B cell (primary cell): ENCODE measurements at regions of chr20 and their contacts with region 1.

Region 1: GRCh38 chr20:3156811-3157619 is 2.6 kb downstream of the FASTKD5 start:
- DNase-seq: peak; percentile 24
- ATAC-seq: peak; percentile 23
- H3K4me3 ChIP-seq: no peak overlapping the region
- H3K4me3 Mint-ChIP-seq: peak overlapping the region; percentile 67
- H3K27ac ChIP-seq: peak overlapping the region; percentile 1 to 48
- H3K27ac Mint-ChIP-seq: peak overlapping the region; percentile 74
- H3K4me1 ChIP-seq: peaks cover 34 to 38% of the 10 kb centered on the region in 2 donors
- H3K4me1 Mint-ChIP-seq: peaks cover 61% of the 10 kb centered on the region
- H3K27me3 ChIP-seq: no peaks in the 10 kb centered on the region
- H3K27me3 Mint-ChIP-seq: no peaks in the 10 kb centered on the region
- CTCF ChIP-seq: no peak

Region 2: GRCh38 chr20:3092611-3093379 is 64.2 kb before region 1 on chr20:
- CTCF ChIA-PET with region 1: no interaction called
- POLR2A ChIA-PET with region 1: no interaction called
- intact Hi-C with region 1: loop called (anchors 2 kb)
- DNase-seq: peak; percentile 73
- ATAC-seq: peak; percentile 59
- H3K4me3 ChIP-seq: peak overlapping the region in 4 of 5 experiments; percentile 44 to 73 (median 58)
- H3K4me3 Mint-ChIP-seq: peak overlapping the region; percentile 93
- H3K27ac ChIP-seq: peak overlapping the region; percentile 58 to 68
- H3K27ac Mint-ChIP-seq: peak overlapping the region; percentile 97
- H3K4me1 ChIP-seq: peaks cover 18 to 27% of the 10 kb centered on the region in 2 donors
- H3K4me1 Mint-ChIP-seq: peaks cover 24% of the 10 kb centered on the region
- H3K27me3 ChIP-seq: peaks cover 0 to 12% (median 6%) of the 10 kb centered on the region in 4 experiments
- H3K27me3 Mint-ChIP-seq: peaks cover 21% of the 10 kb centered on the region
- CTCF ChIP-seq: no peak

Region 3: GRCh38 chr20:3204124-3204822 is 47.3 kb after region 1 on chr20 and contains the start of gene DDRGK1:
- CTCF ChIA-PET with region 1: no interaction called
- POLR2A ChIA-PET with region 1: interaction called, 3 read pairs
- intact Hi-C with region 1: loop called (anchors 5 kb)
- DNase-seq: peak; percentile 96
- ATAC-seq: peak; percentile 93
- H3K4me3 ChIP-seq: peak within 1 kb of the TSS; percentile 73 to 89 (median 84)
- H3K4me3 Mint-ChIP-seq: peak within 1 kb of the TSS; percentile 97
- H3K27ac ChIP-seq: peak within 1 kb of the TSS; percentile 80
- H3K27ac Mint-ChIP-seq: peak within 1 kb of the TSS; percentile 96
- H3K4me1 ChIP-seq: peaks cover 15% of the 10 kb centered on the region in 2 donors
- H3K4me1 Mint-ChIP-seq: peaks cover 20% of the 10 kb centered on the region
- H3K27me3 ChIP-seq: no peaks in the 10 kb centered on the region
- H3K27me3 Mint-ChIP-seq: no peaks in the 10 kb centered on the region
- CTCF ChIP-seq: no peak
- total RNA-seq, gene DDRGK1: 51.9 and 55.5 TPM in 2 replicates